ENCODE measurements at regions of chr5 and their contacts with region 1.

Region 1: DNA sequence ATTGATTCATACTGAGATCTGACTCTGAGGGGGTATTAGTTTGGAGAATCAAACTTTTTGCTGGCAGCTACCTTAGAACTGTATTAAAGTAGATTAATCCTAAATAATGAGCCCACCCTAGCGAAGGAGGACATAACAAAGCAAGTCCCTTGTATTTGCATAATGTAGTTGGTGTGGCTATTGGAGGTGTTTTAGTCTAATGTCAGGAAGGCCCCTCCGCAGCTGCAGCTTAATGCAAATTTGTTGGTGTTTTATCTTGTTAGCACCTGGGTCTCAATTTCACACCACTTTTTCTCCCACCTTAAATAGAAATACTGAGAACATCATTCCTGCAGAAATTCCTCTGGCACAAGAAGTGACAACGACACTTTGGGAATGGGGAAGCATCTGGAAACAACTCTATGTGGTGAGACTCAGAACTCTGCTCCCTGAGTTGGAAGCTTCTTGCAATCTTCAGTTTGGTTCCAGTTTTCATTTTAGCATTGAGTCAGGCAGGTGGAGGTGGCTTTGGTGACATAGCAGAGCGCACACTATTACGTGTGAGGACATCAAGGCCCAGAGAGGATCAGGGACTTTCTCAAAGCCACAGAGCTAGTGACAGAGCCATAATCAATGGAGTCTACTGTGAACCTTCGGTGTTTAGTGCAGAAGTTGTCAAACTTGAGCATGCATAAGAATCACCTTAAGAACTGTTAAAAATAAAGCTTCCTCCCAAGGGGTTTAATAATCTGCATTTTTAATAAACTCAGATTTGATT is 33.9 kb downstream of the DOCK2 start:
- DNase-seq: no peak
- H3K4me3 Mint-ChIP-seq: no peak overlapping the region
- H3K27ac Mint-ChIP-seq: peak overlapping the region; percentile 74
- H3K4me1 Mint-ChIP-seq: peaks cover 36% of the 10 kb centered on the region
- H3K27me3 Mint-ChIP-seq: no peaks in the 10 kb centered on the region

Region 2: DNA sequence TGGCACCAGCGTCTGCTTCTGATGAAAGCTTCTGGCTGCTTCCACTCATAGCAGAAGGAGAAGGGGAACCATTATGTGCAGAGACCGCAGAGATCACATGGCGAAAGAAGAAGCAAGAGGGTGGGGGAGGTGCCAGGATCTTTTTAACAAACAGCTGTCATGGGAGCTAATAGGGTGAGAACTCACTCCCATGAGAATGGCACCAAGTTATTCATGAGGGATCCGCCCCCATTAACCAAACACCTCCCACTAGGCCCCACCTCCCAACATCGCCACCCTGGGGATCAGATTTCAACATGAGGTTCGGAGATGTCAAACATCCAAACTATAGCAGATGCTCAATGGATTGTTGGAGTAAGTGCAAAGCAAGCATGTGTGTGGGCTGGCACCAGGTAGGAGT is 244.2 kb before region 1 on chr5:
- intact Hi-C with region 1: no loop called
- DNase-seq: no peak
- H3K4me3 Mint-ChIP-seq: no peak overlapping the region
- H3K27ac Mint-ChIP-seq: no peak overlapping the region
- H3K4me1 Mint-ChIP-seq: no peaks in the 10 kb centered on the region
- H3K27me3 Mint-ChIP-seq: no peaks in the 10 kb centered on the region

Region 3: GRCh38 chr5:169637085-169637548 is 33.8 kb before region 1 on chr5 and contains the start of gene DOCK2:
- intact Hi-C with region 1: loop called (anchors 5 kb)
- DNase-seq: peak; percentile 69
- H3K4me3 Mint-ChIP-seq: peak within 1 kb of the TSS; percentile 89
- H3K27ac Mint-ChIP-seq: peak within 1 kb of the TSS; percentile 91
- H3K4me1 Mint-ChIP-seq: peaks cover 40% of the 10 kb centered on the region
- H3K27me3 Mint-ChIP-seq: peaks cover 2% of the 10 kb centered on the region
- total RNA-seq, gene DOCK2: 217 and 246 TPM in 2 replicates

Region 4: GRCh38 chr5:169706758-169707691 is 36.1 kb after region 1 on chr5:
- intact Hi-C with region 1: loop called (anchors 5 kb)
- DNase-seq: no peak
- H3K4me3 Mint-ChIP-seq: no peak overlapping the region
- H3K27ac Mint-ChIP-seq: peak overlapping the region; percentile 92
- H3K4me1 Mint-ChIP-seq: peaks cover 40% of the 10 kb centered on the region
- H3K27me3 Mint-ChIP-seq: no peaks in the 10 kb centered on the region

Measured in activated T-helper 2 cell treated with anti-CD3 and anti-CD28 coated beads, Interferon-gamma antibody, Interleukin-2, Interleukin-4, amounts not matched to agents 10 μg/mL and 5 μg/mL and 100 μg/mL, durations not matched to agents 14 hours and 24 hours and 36 hours (primary cell).